Right lobe of liver (tissue), 6 donors: ENCODE measurements at regions of chr22 and their contacts with region 1.

Region 1: GRCh38 chr22:27804470-27805297 is 3.1 kb upstream of the MN1 start:
- DNase-seq: peak; percentile 60 to 69 (median 69)
- ATAC-seq: peak; percentile 62 to 67 (median 66)
- H3K4me3 ChIP-seq: no peak overlapping the region
- H3K27ac ChIP-seq: no peak overlapping the region
- H3K4me1 ChIP-seq: peaks cover 0 to 15% (median 6%) of the 10 kb centered on the region in 4 donors
- H3K27me3 ChIP-seq: peaks cover 0 to 3% of the 10 kb centered on the region in 2 donors
- CTCF ChIP-seq: peak; percentile 64 to 76 (median 72)
- POLR2A ChIP-seq: no peak

Region 2: DNA sequence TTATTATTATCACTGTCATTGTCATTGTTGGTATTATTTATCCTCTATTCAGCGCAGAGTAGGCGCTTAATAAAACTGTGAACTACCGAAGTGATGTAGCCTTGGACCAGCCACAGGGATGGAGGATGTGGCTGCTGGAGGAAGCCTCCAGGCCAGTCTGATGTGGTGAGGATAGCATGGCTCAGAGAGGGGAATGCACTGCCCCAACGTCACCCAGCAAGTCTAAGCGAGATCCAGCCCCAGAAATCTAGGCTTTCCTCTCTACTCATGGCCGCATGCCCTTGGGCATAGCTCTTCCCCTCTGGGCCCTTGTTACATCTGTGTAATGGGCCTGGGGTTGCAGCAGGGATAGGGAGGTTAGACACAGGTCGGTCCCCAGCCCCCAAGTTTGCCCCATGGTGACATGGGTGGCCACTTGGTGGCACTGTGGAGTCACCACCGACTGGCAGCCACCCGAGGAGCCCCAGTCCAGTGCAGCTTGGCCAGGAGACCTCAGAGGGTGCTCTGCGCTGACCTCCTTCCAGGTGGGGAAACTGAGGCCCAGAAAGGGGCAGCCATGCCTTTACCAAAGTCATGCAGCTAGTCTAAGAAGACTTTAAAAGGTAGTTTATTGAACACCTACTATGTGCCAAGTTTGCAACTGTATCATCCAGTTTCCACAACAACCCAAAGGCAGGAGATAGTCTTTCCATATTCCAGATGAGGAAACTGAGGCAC is 398.9 kb before region 1 on chr22:
- intact Hi-C with region 1: loop called (anchors 5 kb)
- DNase-seq: peak; percentile 66 to 73 (median 69)
- ATAC-seq: peak; percentile 89 to 96 (median 92)
- H3K4me3 ChIP-seq: no peak overlapping the region
- H3K27ac ChIP-seq: no peak overlapping the region
- H3K4me1 ChIP-seq: no peaks in the 10 kb centered on the region
- H3K27me3 ChIP-seq: no peaks in the 10 kb centered on the region
- CTCF ChIP-seq: peak; percentile 78 to 89 (median 83)
- POLR2A ChIP-seq: no peak

Region 3: GRCh38 chr22:27412866-27413445 is 391.7 kb before region 1 on chr22:
- intact Hi-C with region 1: loop called (anchors 5 kb)
- DNase-seq: no peak
- ATAC-seq: no peak
- H3K4me3 ChIP-seq: no peak overlapping the region
- H3K27ac ChIP-seq: no peak overlapping the region
- H3K4me1 ChIP-seq: no peaks in the 10 kb centered on the region
- H3K27me3 ChIP-seq: no peaks in the 10 kb centered on the region
- CTCF ChIP-seq: no peak
- POLR2A ChIP-seq: no peak

Region 4: GRCh38 chr22:27668828-27669797 is 135.6 kb before region 1 on chr22:
- intact Hi-C with region 1: no loop called
- DNase-seq: no peak
- ATAC-seq: peak in 3 of 4 donors; percentile 9 to 39 (median 23)
- H3K4me3 ChIP-seq: no peak overlapping the region
- H3K27ac ChIP-seq: no peak overlapping the region
- H3K4me1 ChIP-seq: no peaks in the 10 kb centered on the region
- H3K27me3 ChIP-seq: no peaks in the 10 kb centered on the region
- CTCF ChIP-seq: no peak
- POLR2A ChIP-seq: no peak